Calu3 (cell line): ENCODE measurements at regions of chr2 and their contacts with region 1.

Region 1: GRCh38 chr2:85826990-85827878 is 61.6 kb downstream of the ST3GAL5 start:
- DNase-seq: peak; percentile 80
- H3K4me3 Mint-ChIP-seq: peak overlapping the region; percentile 12
- H3K27ac Mint-ChIP-seq: no peak overlapping the region
- H3K4me1 Mint-ChIP-seq: peaks cover 18% of the 10 kb centered on the region
- H3K27me3 Mint-ChIP-seq: peaks cover 15% of the 10 kb centered on the region
- CTCF ChIP-seq: peak; percentile 74

Region 2: DNA sequence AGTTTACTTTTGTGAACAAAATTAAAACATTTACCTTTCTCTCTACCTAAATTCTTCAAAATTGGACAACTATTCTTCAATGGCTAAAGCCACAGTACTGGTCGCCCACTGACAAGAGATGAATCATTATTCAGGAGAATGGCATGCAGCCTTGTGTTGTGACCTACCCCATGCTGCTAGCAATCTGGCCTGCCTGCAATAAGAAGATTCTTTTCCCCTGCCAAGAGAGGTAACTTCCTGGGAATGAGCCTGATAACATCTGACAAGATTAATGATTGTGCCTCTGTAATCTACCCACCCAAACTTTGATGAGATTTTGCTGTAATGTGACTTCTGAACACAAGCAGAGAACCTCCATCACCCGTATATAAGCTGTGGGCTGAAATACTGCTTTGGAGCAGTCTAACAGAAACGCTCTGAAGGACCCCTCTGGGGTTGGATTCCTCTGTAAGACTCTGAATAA is 108.5 kb after region 1 on chr2:
- CTCF ChIA-PET with region 1: no interaction called
- intact Hi-C with region 1: no loop called
- DNase-seq: peak; percentile 18
- H3K4me3 Mint-ChIP-seq: no peak overlapping the region
- H3K27ac Mint-ChIP-seq: no peak overlapping the region
- H3K4me1 Mint-ChIP-seq: peaks cover 11% of the 10 kb centered on the region
- H3K27me3 Mint-ChIP-seq: no peaks in the 10 kb centered on the region
- CTCF ChIP-seq: no peak

Region 3: GRCh38 chr2:86017901-86018896 is 191.0 kb after region 1 on chr2:
- CTCF ChIA-PET with region 1: no interaction called
- intact Hi-C with region 1: loop called (anchors 2 kb)
- DNase-seq: peak; percentile 71
- H3K4me3 Mint-ChIP-seq: no peak overlapping the region
- H3K27ac Mint-ChIP-seq: no peak overlapping the region
- H3K4me1 Mint-ChIP-seq: no peaks in the 10 kb centered on the region
- H3K27me3 Mint-ChIP-seq: peaks cover 3% of the 10 kb centered on the region
- CTCF ChIP-seq: no peak

Region 4: DNA sequence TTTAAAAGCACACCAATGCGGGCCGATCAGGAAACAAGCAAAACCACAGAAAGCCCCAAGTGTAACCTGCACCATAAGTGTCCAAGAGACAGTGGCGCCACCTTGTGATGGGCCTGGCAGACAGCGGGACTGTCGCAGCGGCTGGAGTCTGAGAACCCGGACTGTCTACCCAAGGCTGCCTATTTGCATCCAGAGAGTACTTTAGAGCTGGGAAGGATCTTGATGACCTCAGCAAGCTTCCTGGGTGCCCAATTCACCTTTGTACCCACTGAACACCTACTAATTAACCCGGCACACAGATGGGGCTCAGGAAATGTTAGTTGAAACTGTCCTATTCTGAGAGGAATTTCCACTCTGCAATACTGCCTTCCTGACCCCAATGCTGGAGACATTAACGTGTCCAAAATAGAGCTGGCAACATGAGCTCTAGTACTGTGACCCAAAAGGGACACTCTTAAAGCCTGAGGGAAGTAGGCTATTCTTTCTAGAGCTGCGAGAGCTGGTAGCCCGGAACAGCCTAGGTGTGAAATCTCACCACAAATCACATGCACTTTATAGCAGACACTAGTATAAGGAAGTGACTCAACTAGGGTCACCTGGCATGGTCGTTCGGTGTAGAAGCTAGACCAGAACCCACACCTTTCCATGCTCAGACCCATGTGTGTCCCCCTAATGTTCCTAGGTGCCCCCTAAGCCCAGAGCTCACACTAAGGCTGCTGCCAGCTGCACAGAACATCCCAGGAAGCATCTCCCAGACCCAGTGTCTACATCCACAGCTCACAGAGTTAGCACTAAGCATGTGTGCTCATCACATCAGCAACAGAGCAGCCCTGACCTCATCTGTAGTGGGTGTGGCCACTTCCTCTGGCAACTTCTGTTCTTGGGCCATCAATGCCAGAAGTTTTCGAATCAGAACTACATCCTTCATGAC is 253.0 kb after region 1 on chr2:
- CTCF ChIA-PET with region 1: interaction called, 42 read pairs
- intact Hi-C with region 1: loop called (anchors 1 kb)
- DNase-seq: peak; percentile 77
- H3K4me3 Mint-ChIP-seq: no peak overlapping the region
- H3K27ac Mint-ChIP-seq: no peak overlapping the region
- H3K4me1 Mint-ChIP-seq: no peaks in the 10 kb centered on the region
- H3K27me3 Mint-ChIP-seq: no peaks in the 10 kb centered on the region
- CTCF ChIP-seq: peak; percentile 71

Region 5: DNA sequence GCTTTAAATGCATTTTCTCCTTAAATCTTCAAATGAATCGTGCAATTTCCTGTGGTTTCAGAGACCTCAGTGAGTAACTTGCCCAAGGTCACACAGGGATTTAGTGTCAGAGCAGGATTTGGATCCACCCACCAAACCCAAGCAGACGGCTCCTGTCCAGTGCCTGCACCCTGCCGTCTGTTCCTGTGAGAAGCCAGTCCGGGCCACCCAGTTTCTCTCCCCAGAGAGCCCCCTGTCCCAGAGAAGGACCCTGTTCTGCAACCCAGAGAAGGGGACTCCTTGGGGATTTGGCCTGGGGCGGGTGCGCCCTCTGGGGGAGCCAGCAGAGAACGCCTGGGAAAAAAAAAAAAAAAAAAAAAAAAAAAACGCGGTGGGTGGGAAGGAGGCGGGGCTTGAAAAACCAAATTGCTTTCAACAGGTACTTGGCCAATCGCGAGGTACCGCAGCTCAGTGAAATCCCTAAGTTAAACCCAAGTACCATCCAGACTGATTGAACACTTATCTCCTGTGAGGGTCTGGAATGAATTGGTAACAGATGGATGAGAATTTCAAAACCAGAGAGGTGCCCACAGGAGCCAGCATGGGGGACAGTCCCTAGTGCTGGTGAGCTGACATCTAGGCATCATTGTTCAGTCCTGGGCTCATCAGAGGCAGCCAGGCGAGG is 541.1 kb after region 1 on chr2:
- CTCF ChIA-PET with region 1: no interaction called
- intact Hi-C with region 1: loop called (anchors 10 kb)
- DNase-seq: peak; percentile 49
- H3K4me3 Mint-ChIP-seq: peak overlapping the region; percentile 21
- H3K27ac Mint-ChIP-seq: no peak overlapping the region
- H3K4me1 Mint-ChIP-seq: peaks cover 13% of the 10 kb centered on the region
- H3K27me3 Mint-ChIP-seq: peaks cover 3% of the 10 kb centered on the region
- CTCF ChIP-seq: peak; percentile 69